ENCODE measurements at regions of chr10 and their contacts with region 1.

Region 1: GRCh38 chr10:51638737-51639136 is 60.7 kb downstream of the CSTF2T start:
- DNase-seq: no peak
- ATAC-seq: 0 out of 3 replicates have a peak, but pooled peaks have one; percentile 29
- H3K4me3 ChIP-seq: no peak overlapping the region
- H3K27ac ChIP-seq: no peak overlapping the region
- H3K4me1 ChIP-seq: no peaks in the 10 kb centered on the region
- H3K27me3 ChIP-seq: no peaks in the 10 kb centered on the region; a peak in 1 of 4 replicates
- CTCF ChIP-seq: no peak
- EP300 ChIP-seq: no peak
- POLR2A ChIP-seq: no peak
- RAD21 ChIP-seq: no peak

Region 2: DNA sequence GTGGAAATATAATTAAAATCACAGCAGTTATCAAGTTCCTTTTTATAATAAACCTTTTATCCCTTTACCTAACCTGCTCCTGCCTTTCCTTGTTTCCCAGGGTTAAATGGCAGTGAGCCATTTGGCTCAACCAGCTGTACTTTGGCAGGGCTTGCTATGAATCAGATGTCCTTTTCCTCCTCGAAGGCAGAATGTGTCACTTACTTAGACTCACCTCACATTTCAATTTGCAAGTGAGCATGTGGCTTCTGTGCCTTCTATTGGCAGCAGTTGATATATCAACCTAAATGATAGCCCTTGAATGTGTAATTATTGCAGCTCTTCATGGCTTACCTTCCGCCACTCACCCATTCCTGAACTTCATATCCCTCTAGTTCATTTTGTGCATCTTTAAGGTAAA is 241.0 kb before region 1 on chr10:
- CTCF ChIA-PET with region 1: no interaction called
- POLR2A ChIA-PET with region 1: interaction called, 10 read pairs
- RAD21 ChIA-PET with region 1: no interaction called
- SMC1A ChIA-PET with region 1: no interaction called
- in situ Hi-C with region 1: no loop called
- intact Hi-C with region 1: no loop called
- DNase-seq: no peak
- ATAC-seq: no peak
- H3K4me3 ChIP-seq: no peak overlapping the region
- H3K27ac ChIP-seq: no peak overlapping the region
- H3K4me1 ChIP-seq: no peaks in the 10 kb centered on the region
- H3K27me3 ChIP-seq: no peaks in the 10 kb centered on the region; a peak in 1 of 4 replicates
- CTCF ChIP-seq: no peak
- EP300 ChIP-seq: no peak
- POLR2A ChIP-seq: no peak
- RAD21 ChIP-seq: no peak